ENCODE measurements at regions of chr15 and their contacts with region 1.

Region 1: DNA sequence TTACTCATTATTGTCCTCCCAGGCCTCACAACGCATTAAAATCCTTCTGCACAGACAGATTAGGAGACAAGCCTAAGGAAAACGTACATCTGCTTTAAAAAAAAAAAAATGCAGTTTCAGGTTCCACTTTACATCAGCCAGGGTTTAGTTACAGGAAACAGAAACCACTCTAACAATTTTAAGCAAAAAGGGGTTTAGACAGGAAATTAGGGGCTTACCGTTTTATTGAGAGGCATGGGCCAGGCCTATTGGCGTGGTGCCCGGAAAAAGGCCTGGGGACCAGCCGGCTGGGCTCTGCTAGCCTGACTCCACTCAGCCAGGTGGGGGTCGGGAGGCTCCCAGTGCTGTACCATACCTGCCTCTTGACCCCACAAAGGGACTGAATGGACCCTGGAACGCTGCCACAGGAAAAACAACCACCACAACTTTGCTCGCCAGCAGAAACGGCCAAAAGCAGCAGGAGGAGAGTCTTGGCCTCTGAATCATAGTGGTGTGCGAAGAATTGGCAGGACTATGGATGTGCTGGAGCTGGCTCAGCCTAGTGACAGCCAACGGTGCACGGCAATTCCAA is 124.3 kb downstream of the CHSY1 start:
- DNase-seq: peak; percentile 67
- H3K4me3 Mint-ChIP-seq: peak overlapping the region; percentile 53
- H3K27ac Mint-ChIP-seq: peak overlapping the region; percentile 91
- H3K4me1 Mint-ChIP-seq: peaks cover 50% of the 10 kb centered on the region
- H3K27me3 Mint-ChIP-seq: peaks cover 4% of the 10 kb centered on the region

Region 2: DNA sequence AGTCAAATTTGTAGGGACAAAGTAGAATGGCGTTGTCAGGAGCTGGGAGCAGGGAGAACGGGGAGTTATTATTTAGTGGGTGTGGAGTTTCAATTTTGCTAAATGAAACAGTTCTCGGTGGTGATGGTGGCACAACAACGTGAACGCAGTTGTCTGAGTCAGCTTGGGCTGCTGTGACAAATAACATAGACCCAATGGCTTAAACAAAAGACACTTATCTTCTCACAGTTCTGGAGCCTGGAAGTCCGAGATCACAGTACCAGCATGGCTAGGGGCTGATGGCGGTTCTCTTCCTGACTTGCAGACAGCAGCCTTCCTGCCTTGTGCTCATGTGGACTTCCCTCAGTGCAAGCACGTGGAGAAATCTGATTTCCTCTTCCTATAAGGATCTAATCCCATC is 34.1 kb after region 1 on chr15:
- CTCF ChIA-PET with region 1: no interaction called
- POLR2A ChIA-PET with region 1: no interaction called
- intact Hi-C with region 1: loop called (anchors 1 kb)
- DNase-seq: peak; percentile 73
- H3K4me3 Mint-ChIP-seq: peak overlapping the region; percentile 4
- H3K27ac Mint-ChIP-seq: peak overlapping the region; percentile 75
- H3K4me1 Mint-ChIP-seq: peaks cover 33% of the 10 kb centered on the region
- H3K27me3 Mint-ChIP-seq: no peaks in the 10 kb centered on the region

Region 3: DNA sequence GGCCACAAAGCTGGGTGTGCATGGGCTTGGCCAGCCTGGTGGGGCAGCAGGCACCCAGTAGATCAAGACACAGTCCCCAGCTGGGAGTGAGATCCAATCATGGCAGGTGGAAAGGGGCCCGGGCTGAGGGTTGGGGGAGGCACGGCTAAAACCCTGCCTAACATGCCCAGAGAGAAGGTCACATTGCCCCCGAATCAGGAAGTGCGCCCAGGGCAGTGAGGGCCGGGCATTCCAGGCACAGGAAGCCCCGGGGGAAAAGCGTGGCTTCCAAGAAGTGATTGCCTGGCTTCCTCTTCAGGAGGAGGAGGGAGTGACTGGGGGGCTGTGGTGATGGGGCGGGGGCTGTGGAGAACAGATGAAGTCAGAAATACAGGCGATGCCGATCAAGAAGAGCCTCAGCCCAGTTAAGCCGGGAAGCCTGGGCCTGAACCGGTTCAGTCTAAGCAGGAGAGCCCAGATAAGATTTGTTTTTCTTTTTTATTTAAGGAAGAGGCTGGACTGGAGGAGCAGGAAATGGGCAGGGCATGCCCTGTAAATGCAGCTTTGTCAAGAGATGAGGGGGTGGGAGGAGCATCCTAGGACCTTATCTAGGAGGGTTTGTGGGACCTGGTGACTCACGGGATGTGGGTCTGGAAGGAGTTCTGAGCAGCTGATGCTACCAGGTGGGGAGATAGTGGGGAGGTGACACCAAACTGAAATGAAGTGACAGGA is 40.3 kb after region 1 on chr15:
- CTCF ChIA-PET with region 1: interaction called, 4 read pairs
- POLR2A ChIA-PET with region 1: no interaction called
- intact Hi-C with region 1: loop called (anchors 1 kb)
- DNase-seq: peak; percentile 88
- H3K4me3 Mint-ChIP-seq: peak overlapping the region; percentile 44
- H3K27ac Mint-ChIP-seq: peak overlapping the region; percentile 87
- H3K4me1 Mint-ChIP-seq: peaks cover 21% of the 10 kb centered on the region
- H3K27me3 Mint-ChIP-seq: no peaks in the 10 kb centered on the region

Region 4: GRCh38 chr15:101188637-101189408 is 61.2 kb after region 1 on chr15:
- CTCF ChIA-PET with region 1: no interaction called
- POLR2A ChIA-PET with region 1: interaction called, 8 read pairs
- intact Hi-C with region 1: loop called (anchors 1 kb)
- DNase-seq: no peak
- H3K4me3 Mint-ChIP-seq: peak overlapping the region; percentile 54
- H3K27ac Mint-ChIP-seq: peak overlapping the region; percentile 90
- H3K4me1 Mint-ChIP-seq: peaks cover 81% of the 10 kb centered on the region
- H3K27me3 Mint-ChIP-seq: no peaks in the 10 kb centered on the region

Region 5: DNA sequence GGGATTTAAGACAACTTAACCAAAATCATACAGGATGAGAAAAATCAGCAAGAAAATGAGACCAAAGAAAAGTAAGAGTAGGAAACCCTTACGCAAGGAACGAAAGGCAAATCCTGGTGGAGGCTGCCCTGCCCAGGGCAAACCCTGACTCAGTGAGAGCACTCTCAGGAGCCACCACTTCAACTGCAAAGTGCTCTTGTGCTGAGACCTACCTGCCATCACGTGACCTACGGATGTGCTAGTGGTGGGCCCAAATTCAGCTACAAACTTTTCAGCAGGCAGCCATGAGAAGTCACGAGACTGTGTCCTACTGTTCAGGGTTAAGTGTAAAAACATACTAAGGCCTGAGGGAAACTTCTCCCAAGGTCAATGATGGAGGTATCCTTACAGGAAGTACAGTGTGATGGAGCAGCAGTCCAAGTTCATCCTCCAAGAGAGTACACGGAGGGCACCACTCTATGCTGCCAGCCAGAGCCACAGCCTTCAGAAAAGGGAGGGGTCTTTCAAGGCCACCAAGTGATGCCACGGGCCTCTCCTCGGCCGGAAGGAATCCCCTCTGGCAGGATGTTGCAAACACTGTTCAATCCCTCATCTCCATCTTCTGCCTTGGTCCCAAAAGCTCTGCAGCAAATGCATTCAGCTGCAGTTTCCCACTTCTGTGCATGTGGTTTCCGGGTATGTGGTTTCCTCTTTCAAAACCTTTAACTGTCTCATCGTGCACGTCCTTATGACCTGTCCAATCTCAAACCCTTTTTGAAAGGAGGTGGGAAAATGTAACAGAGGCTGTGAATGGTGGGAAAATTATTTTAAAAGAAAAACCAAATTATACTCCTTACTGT is 114.8 kb after region 1 on chr15:
- CTCF ChIA-PET with region 1: interaction called, 3 read pairs
- POLR2A ChIA-PET with region 1: no interaction called
- intact Hi-C with region 1: loop called (anchors 2 kb)
- DNase-seq: peak; percentile 68
- H3K4me3 Mint-ChIP-seq: peak overlapping the region; percentile 50
- H3K27ac Mint-ChIP-seq: peak overlapping the region; percentile 82
- H3K4me1 Mint-ChIP-seq: peaks cover 83% of the 10 kb centered on the region
- H3K27me3 Mint-ChIP-seq: no peaks in the 10 kb centered on the region

Measured in activated CD4-positive, alpha-beta memory T cell treated with anti-CD3 and anti-CD28 coated beads for 36 hours (primary cell).